ENCODE measurements at regions of chr16 and their contacts with region 1.

Region 1: DNA sequence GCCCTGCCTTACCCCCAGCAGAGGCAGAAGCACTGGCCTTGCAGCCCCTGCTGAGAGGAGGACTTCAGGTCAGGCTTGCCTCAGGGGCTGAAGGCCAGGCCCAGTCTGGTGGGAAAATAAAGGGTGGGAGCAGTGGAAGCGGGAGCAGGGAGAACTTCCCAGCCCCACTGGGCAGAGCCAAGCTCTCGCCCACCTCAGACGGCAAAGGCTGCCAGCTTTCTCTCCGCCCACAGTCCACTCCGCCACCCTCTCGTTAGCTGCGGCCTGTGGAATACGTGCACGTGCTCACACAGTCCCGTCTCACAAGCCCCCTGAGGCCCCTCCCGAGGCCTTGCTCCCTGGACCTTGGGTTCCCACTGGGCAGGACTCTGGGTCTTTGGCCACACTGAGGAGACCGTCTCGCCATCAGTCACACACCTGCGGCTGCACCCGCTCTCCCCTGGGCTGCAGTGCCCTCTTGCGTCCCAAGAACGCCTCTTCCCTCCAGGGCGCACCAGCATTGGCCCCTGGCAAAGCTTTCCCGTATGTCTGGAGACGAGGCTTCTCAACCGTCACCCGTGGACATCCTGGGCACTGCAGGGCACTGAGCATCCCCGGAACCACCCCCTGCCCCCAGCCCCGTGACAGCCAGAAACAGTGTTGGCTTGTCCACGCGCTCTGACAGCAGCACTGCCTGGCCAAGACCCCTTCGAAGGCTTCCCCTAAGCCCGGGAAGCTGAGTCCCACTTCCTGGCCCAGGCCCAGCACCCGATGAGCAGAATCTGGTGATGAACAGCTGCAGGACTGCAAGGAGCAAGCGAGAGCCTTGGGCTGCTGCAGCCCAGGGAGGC is 8.3 kb downstream of the MRPL28 start:
- DNase-seq: peak; percentile 43 to 81 (median 62)
- H3K4me3 ChIP-seq: no peak overlapping the region
- H3K4me3 Mint-ChIP-seq: peak overlapping the region in 4 of 7 donors; percentile 25 to 66 (median 44)
- H3K27ac ChIP-seq: no peak overlapping the region
- H3K27ac Mint-ChIP-seq: peak overlapping the region in 5 of 8 donors; percentile 36 to 83 (median 74)
- H3K4me1 ChIP-seq: peaks cover 4% of the 10 kb centered on the region
- H3K4me1 Mint-ChIP-seq: peaks cover 6% of the 10 kb centered on the region in 3 donors
- H3K27me3 ChIP-seq: no peaks in the 10 kb centered on the region
- H3K27me3 Mint-ChIP-seq: peaks cover 1 to 3% of the 10 kb centered on the region in 2 donors

Region 2: GRCh38 chr16:106623-107324 is 255.3 kb before region 1 on chr16:
- CTCF ChIA-PET with region 1: interaction called, 39 read pairs
- POLR2A ChIA-PET with region 1: interaction called, 3 read pairs
- DNase-seq: peak; percentile 33 to 70 (median 57)
- H3K4me3 ChIP-seq: no peak overlapping the region
- H3K4me3 Mint-ChIP-seq: no peak overlapping the region
- H3K27ac ChIP-seq: no peak overlapping the region
- H3K27ac Mint-ChIP-seq: no peak overlapping the region
- H3K4me1 ChIP-seq: no peaks in the 10 kb centered on the region
- H3K4me1 Mint-ChIP-seq: peaks cover 4 to 5% (median 5%) of the 10 kb centered on the region in 3 donors
- H3K27me3 ChIP-seq: no peaks in the 10 kb centered on the region
- H3K27me3 Mint-ChIP-seq: no peaks in the 10 kb centered on the region

Region 3: GRCh38 chr16:117379-118365 is 244.4 kb before region 1 on chr16:
- CTCF ChIA-PET with region 1: interaction called, 14 read pairs
- POLR2A ChIA-PET with region 1: no interaction called
- DNase-seq: peak; percentile 52 to 73 (median 59)
- H3K4me3 ChIP-seq: no peak overlapping the region
- H3K4me3 Mint-ChIP-seq: no peak overlapping the region
- H3K27ac ChIP-seq: no peak overlapping the region
- H3K27ac Mint-ChIP-seq: peak overlapping the region in 2 of 8 donors; percentile 17 to 54
- H3K4me1 ChIP-seq: no peaks in the 10 kb centered on the region
- H3K4me1 Mint-ChIP-seq: peaks cover under 1 to 13% (median 8%) of the 10 kb centered on the region in 3 donors
- H3K27me3 ChIP-seq: no peaks in the 10 kb centered on the region
- H3K27me3 Mint-ChIP-seq: no peaks in the 10 kb centered on the region

Region 4: GRCh38 chr16:228818-229730 is 133.0 kb before region 1 on chr16 and contains the start of gene LUC7L:
- CTCF ChIA-PET with region 1: interaction called, 11 read pairs
- POLR2A ChIA-PET with region 1: no interaction called
- DNase-seq: peak; percentile 78 to 90 (median 84)
- H3K4me3 ChIP-seq: peak within 1 kb of the TSS; percentile 78
- H3K4me3 Mint-ChIP-seq: peak within 1 kb of the TSS; percentile 86 to 95 (median 89)
- H3K27ac ChIP-seq: peak within 1 kb of the TSS; percentile 95
- H3K27ac Mint-ChIP-seq: peak within 1 kb of the TSS; percentile 87 to 97 (median 96)
- H3K4me1 ChIP-seq: peaks cover 25% of the 10 kb centered on the region
- H3K4me1 Mint-ChIP-seq: peaks cover 29 to 39% (median 39%) of the 10 kb centered on the region in 3 donors
- H3K27me3 ChIP-seq: no peaks in the 10 kb centered on the region
- H3K27me3 Mint-ChIP-seq: no peaks in the 10 kb centered on the region
- total RNA-seq, gene LUC7L: 78.5 to 80.0 TPM

Region 5: DNA sequence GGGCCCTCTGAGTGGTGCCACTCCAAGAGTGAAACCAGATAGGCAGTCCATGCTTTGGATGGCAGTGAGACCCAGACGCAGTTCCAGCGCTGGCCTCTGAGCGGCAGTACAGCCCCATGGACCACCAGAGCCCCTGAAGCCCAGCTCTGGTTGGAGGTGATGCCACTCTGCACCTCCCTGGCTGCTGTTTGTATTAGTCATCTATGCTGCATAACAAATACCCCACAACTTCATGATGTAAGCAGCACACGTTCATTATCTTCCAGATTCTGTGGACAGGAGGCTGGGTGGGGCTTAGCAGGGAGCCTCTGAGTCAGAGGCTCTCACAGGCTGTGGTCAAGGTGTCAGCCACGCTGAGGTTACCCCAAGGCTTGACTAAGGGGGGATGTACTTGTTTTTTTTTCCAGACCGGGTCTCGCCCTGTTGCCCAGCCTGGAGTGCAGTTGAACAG is 29.8 kb after region 1 on chr16:
- CTCF ChIA-PET with region 1: interaction called, 10 read pairs
- POLR2A ChIA-PET with region 1: no interaction called
- DNase-seq: peak; percentile 66 to 87 (median 72)
- H3K4me3 ChIP-seq: no peak overlapping the region
- H3K4me3 Mint-ChIP-seq: peak overlapping the region in 5 of 7 donors; percentile 16 to 68 (median 44)
- H3K27ac ChIP-seq: no peak overlapping the region
- H3K27ac Mint-ChIP-seq: peak overlapping the region in 7 of 8 donors; percentile 9 to 94 (median 85)
- H3K4me1 ChIP-seq: peaks cover 12% of the 10 kb centered on the region
- H3K4me1 Mint-ChIP-seq: peaks cover 21 to 27% (median 22%) of the 10 kb centered on the region in 3 donors
- H3K27me3 ChIP-seq: no peaks in the 10 kb centered on the region
- H3K27me3 Mint-ChIP-seq: peaks cover 3 to 8% of the 10 kb centered on the region in 2 donors

Measured in CD8-positive, alpha-beta memory T cell (primary cell).